ENCODE measurements at regions of chr7 and their contacts with region 1.

Region 1: GRCh38 chr7:155391414-155391813 is 66.5 kb upstream of the EN2 start:
- DNase-seq: no peak
- H3K4me3 ChIP-seq: no peak overlapping the region
- H3K27me3 ChIP-seq: peaks cover 1% of the 10 kb centered on the region
- CTCF ChIP-seq: no peak

Region 2: DNA sequence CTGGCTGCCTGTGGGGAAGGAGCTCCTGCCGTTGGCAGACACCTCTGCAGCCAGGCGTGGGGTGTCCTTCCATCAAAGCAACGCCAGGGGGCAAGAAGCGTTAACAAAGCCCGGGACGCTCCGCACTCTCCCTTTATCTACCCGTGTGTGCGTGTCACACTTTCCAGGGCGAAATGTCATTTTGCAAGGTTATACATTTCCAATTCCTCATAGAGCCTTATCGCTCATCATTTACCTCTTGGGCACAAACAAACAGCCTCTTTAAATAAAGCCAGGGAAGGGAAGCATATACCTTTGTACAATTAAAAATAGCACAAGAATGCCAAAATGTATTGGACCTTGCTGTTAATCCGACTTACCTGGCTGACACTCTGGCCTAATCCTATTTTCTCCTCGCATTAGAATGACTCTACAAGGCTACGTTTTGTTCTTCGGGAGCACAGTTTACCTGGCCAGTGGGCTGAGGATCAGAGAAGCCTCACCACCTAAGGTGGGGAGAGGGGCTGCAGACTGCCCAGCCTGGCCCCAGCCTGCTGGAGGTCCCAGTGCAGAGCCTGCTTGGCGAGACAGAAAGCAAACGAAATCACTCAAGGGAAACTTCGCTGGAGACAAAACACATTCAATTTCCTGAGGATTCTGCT is 11.1 kb before region 1 on chr7:
- CTCF ChIA-PET with region 1: interaction called, 10 read pairs
- POLR2A ChIA-PET with region 1: no interaction called
- DNase-seq: no peak
- H3K4me3 ChIP-seq: no peak overlapping the region
- H3K27me3 ChIP-seq: peaks cover 69% of the 10 kb centered on the region
- CTCF ChIP-seq: peak; percentile 79

Region 3: GRCh38 chr7:155439311-155440017 is 48.0 kb after region 1 on chr7:
- CTCF ChIA-PET with region 1: no interaction called
- POLR2A ChIA-PET with region 1: no interaction called
- DNase-seq: no peak
- H3K4me3 ChIP-seq: no peak overlapping the region
- H3K27me3 ChIP-seq: 0 out of 2 replicates have a peak, but pooled peaks cover 2% of the 10 kb centered on the region
- CTCF ChIP-seq: no peak